ENCODE measurements at regions of chr15 and their contacts with region 1.

Region 1: GRCh38 chr15:99565299-99566156 is at the start of gene MEF2A:
- ATAC-seq: peak; percentile 65 to 82 (median 80)
- H3K4me3 ChIP-seq: peak within 1 kb of the TSS; percentile 59 to 86 (median 65)
- H3K27ac ChIP-seq: peak within 1 kb of the TSS; percentile 94 to 95
- H3K4me1 ChIP-seq: peaks cover 9 to 24% of the 10 kb centered on the region in 2 donors
- total RNA-seq, gene MEF2A: 12.9 to 65.4 (median 30.9) TPM

Region 2: DNA sequence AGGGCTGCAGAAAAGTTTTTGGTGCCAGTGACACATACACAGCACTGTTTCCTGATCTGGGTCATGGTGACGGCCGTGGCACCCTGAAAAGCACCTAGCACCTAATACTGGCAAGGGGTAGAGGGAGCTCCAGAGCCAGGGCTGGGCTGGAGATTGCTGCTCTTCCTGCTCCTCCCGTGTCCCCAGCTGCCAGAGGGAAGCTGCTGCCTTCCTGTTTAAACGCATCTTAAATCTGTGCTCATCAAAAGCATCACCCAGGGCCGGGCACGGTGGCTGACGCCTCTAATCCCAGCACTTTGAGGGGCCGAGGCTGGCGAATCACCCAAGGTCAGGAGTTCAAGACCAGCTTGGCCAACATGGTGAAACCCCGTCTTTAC is 156.4 kb before region 1 on chr15:
- in situ Hi-C with region 1: loop called in 1 of 9 experiments (anchors 25 kb)
- ATAC-seq: peak; percentile 55 to 93 (median 76)
- H3K4me3 ChIP-seq: no peak overlapping the region
- H3K27ac ChIP-seq: no peak overlapping the region
- H3K4me1 ChIP-seq: no peaks in the 10 kb centered on the region

Region 3: DNA sequence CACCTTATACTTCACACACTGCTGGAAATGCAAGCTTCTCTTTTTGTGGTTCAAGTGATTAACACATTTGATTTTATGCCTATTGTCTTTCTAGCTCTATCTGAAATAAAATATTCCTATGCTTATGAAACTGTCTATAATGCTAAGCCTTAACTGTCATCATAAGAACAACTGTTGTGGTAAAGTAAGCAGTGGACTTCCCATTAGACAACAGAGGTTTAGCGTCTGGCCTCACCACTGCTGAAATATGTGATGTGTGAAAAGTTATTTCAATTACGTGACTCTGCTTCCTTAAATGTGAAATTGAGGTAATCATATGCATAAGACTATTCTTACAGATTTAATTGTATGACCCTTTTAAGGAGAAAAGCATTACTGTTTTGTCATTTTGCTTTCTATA is 307.9 kb after region 1 on chr15:
- in situ Hi-C with region 1: no loop called
- ATAC-seq: no peak
- H3K4me3 ChIP-seq: no peak overlapping the region
- H3K27ac ChIP-seq: no peak overlapping the region
- H3K4me1 ChIP-seq: no peaks in the 10 kb centered on the region